ENCODE measurements at regions of chr3 and their contacts with region 1.

Region 1: GRCh38 chr3:101189796-101190195 is 130.6 kb downstream of the IMPG2 start:
- DNase-seq: no peak
- H3K4me3 ChIP-seq: no peak overlapping the region
- H3K27ac ChIP-seq: no peak overlapping the region
- H3K4me1 ChIP-seq: peaks cover 9% of the 10 kb centered on the region
- H3K27me3 ChIP-seq: no peaks in the 10 kb centered on the region
- CTCF ChIP-seq: no peak

Region 2: GRCh38 chr3:101146946-101147345 is 42.9 kb before region 1 on chr3:
- CTCF ChIA-PET with region 1: no interaction called
- dilution Hi-C with region 1: no loop called
- in situ Hi-C with region 1: no loop called
- intact Hi-C with region 1: loop called (anchors 5 kb)
- DNase-seq: no peak
- H3K4me3 ChIP-seq: no peak overlapping the region
- H3K27ac ChIP-seq: no peak overlapping the region
- H3K4me1 ChIP-seq: no peaks in the 10 kb centered on the region
- H3K27me3 ChIP-seq: no peaks in the 10 kb centered on the region
- CTCF ChIP-seq: no peak

Region 3: GRCh38 chr3:101212730-101213129 is 22.9 kb after region 1 on chr3:
- CTCF ChIA-PET with region 1: no interaction called
- dilution Hi-C with region 1: no loop called
- in situ Hi-C with region 1: no loop called
- intact Hi-C with region 1: no loop called
- DNase-seq: no peak
- H3K4me3 ChIP-seq: no peak overlapping the region
- H3K27ac ChIP-seq: no peak overlapping the region
- H3K4me1 ChIP-seq: no peaks in the 10 kb centered on the region
- H3K27me3 ChIP-seq: no peaks in the 10 kb centered on the region
- CTCF ChIP-seq: no peak

Region 4: GRCh38 chr3:101512646-101513418 is 323.0 kb after region 1 on chr3 and contains the start of gene SENP7:
- CTCF ChIA-PET with region 1: no interaction called
- dilution Hi-C with region 1: no loop called
- in situ Hi-C with region 1: no loop called
- intact Hi-C with region 1: no loop called
- DNase-seq: peak; percentile 83
- H3K4me3 ChIP-seq: peak within 1 kb of the TSS; percentile 68 to 94 (median 69)
- H3K27ac ChIP-seq: peak within 1 kb of the TSS; percentile 85
- H3K4me1 ChIP-seq: peaks cover 14% of the 10 kb centered on the region
- H3K27me3 ChIP-seq: no peaks in the 10 kb centered on the region
- CTCF ChIP-seq: no peak
- total RNA-seq, gene SENP7: 7.2 to 8.9 TPM

Measured in mammary epithelial cell (primary cell).